Colonic mucosa (tissue), 4 donors: ENCODE measurements at regions of chr3 and their contacts with region 1.

Region 1: GRCh38 chr3:126134219-126134975 is 46.0 kb downstream of the ALDH1L1 start:
- DNase-seq: peak; percentile 65
- H3K4me3 ChIP-seq: no peak overlapping the region
- H3K27ac ChIP-seq: no peak overlapping the region
- H3K4me1 ChIP-seq: no peaks in the 10 kb centered on the region
- H3K27me3 ChIP-seq: no peaks in the 10 kb centered on the region
- CTCF ChIP-seq: peak; percentile 74

Region 2: GRCh38 chr3:126197854-126198584 is 63.6 kb after region 1 on chr3:
- intact Hi-C with region 1: loop called (anchors 2 kb)
- DNase-seq: peak; percentile 70
- H3K4me3 ChIP-seq: no peak overlapping the region
- H3K27ac ChIP-seq: no peak overlapping the region
- H3K4me1 ChIP-seq: no peaks in the 10 kb centered on the region
- H3K27me3 ChIP-seq: no peaks in the 10 kb centered on the region
- CTCF ChIP-seq: peak; percentile 71

Region 3: GRCh38 chr3:126245811-126246727 is 111.7 kb after region 1 on chr3:
- intact Hi-C with region 1: loop called (anchors 10 kb)
- DNase-seq: peak; percentile 53
- H3K4me3 ChIP-seq: no peak overlapping the region
- H3K27ac ChIP-seq: no peak overlapping the region
- H3K4me1 ChIP-seq: no peaks in the 10 kb centered on the region
- H3K27me3 ChIP-seq: no peaks in the 10 kb centered on the region
- CTCF ChIP-seq: no peak

Region 4: DNA sequence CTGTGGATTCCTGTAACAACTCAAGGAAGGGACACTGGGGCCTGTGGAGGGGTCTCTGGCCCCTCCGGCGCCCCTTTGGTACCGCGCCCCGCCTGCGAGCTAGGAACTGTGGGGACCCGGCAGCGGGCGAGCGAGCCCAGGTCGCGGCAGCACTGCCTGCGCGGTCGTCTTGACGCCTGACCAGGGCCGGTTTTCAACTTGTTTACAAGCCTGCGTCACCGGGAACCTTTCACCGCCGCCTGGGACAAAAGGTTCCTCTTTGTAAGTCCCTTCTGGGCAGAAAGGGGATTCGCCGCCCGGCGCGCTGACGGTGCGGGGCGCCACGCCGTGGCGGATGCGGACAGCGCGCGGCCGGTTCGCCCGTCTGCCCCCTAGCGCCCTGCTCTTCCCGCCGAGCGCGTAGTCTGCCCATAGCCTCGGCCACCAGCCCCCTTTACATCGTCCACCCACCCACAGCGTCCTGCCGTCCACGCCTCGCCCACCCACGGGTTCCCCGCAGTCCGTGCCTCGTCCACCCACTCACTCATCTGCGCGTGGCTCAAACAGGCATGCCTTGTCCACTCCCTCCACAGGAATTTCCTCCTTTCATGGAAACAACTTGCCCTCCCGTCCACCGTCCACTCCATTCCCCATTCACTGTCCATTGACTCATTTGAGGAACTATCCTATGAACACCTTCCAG is 254.9 kb after region 1 on chr3:
- intact Hi-C with region 1: loop called (anchors 2 kb)
- DNase-seq: peak; percentile 87
- H3K4me3 ChIP-seq: peak overlapping the region; percentile 29
- H3K27ac ChIP-seq: no peak overlapping the region
- H3K4me1 ChIP-seq: no peaks in the 10 kb centered on the region
- H3K27me3 ChIP-seq: no peaks in the 10 kb centered on the region
- CTCF ChIP-seq: peak; percentile 90